ENCODE measurements at regions of chr5 and their contacts with region 1.

Region 1: DNA sequence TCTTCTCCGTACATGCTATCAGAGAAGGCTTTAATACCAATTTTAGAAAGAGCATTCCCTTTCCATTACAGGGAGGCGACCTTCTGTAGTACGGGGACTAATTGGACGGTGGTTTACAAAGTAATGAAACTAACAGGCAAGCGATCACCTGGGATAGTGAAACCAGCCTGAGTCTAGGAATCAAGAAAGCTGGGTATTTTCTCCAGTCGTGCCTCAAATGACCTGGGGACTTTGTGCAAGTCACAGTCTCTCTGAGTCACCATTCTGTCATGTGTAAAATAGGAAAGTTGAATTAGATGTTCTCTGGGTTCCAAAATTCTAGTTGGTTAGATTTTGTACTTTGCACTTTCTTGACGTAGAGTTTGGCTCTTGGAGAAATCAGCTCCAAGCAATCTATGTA is 22.7 kb upstream of the SSBP2 start:
- DNase-seq: no peak
- CTCF ChIP-seq: no peak

Region 2: DNA sequence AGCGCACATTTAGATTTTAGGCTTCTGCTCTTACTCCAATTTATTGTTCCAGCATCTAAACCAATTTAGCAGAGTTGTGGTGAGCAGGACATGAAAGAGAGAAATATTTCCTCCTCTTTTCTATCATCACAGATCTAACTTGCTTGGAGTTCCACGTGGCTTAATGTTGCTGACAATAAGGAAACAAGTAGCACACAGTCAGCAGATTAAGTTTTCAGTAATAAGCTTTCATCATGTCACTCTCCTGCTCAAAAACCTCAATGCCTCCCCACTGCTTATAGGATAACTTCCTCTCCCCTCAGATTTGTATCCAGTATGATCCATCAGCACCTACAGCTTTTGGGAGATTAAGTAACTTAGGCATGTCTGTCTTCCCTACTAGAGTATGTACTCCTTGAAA is 12.3 kb before region 1 on chr5:
- CTCF ChIA-PET with region 1: interaction called, 12 read pairs
- POLR2A ChIA-PET with region 1: no interaction called
- DNase-seq: no peak
- CTCF ChIP-seq: no peak

Measured in GM10248 (cell line).